ENCODE measurements at regions of chr5 and their contacts with region 1.

Region 1: GRCh38 chr5:172412724-172413286 is 41.5 kb downstream of the SH3PXD2B start:
- DNase-seq: no peak
- H3K4me3 Mint-ChIP-seq: no peak overlapping the region
- H3K27ac Mint-ChIP-seq: peak overlapping the region; percentile 15
- H3K4me1 Mint-ChIP-seq: peaks cover 31% of the 10 kb centered on the region
- H3K27me3 Mint-ChIP-seq: peaks cover 6% of the 10 kb centered on the region

Region 2: GRCh38 chr5:172223901-172224873 is 188.6 kb before region 1 on chr5:
- intact Hi-C with region 1: loop called (anchors 2 kb)
- DNase-seq: no peak
- H3K4me3 Mint-ChIP-seq: no peak overlapping the region
- H3K27ac Mint-ChIP-seq: peak overlapping the region; percentile 87
- H3K4me1 Mint-ChIP-seq: peaks cover 28% of the 10 kb centered on the region
- H3K27me3 Mint-ChIP-seq: peaks cover 5% of the 10 kb centered on the region

Region 3: GRCh38 chr5:172443441-172444109 is 30.8 kb after region 1 on chr5:
- intact Hi-C with region 1: loop called (anchors 1 kb)
- DNase-seq: no peak
- H3K4me3 Mint-ChIP-seq: no peak overlapping the region
- H3K27ac Mint-ChIP-seq: peak overlapping the region; percentile 31
- H3K4me1 Mint-ChIP-seq: peaks cover 12% of the 10 kb centered on the region
- H3K27me3 Mint-ChIP-seq: peaks cover 19% of the 10 kb centered on the region

Region 4: GRCh38 chr5:172556971-172557461 is 144.2 kb after region 1 on chr5:
- intact Hi-C with region 1: no loop called
- DNase-seq: no peak
- H3K4me3 Mint-ChIP-seq: no peak overlapping the region
- H3K27ac Mint-ChIP-seq: no peak overlapping the region
- H3K4me1 Mint-ChIP-seq: no peaks in the 10 kb centered on the region
- H3K27me3 Mint-ChIP-seq: peaks cover 2% of the 10 kb centered on the region